CD8-positive, alpha-beta T cell (primary cell): ENCODE measurements at regions of chr5 and their contacts with region 1.

Region 1: GRCh38 chr5:611721-612486 is at the start of gene CEP72:
- DNase-seq: peak; percentile 84 to 96 (median 94)
- ATAC-seq: peak; percentile 97
- H3K4me3 ChIP-seq: peak within 1 kb of the TSS; percentile 71 to 88
- H3K4me3 Mint-ChIP-seq: peak within 1 kb of the TSS; percentile 88
- H3K27ac ChIP-seq: peak within 1 kb of the TSS; percentile 17 to 49
- H3K27ac Mint-ChIP-seq: peak within 1 kb of the TSS; percentile 82
- H3K4me1 ChIP-seq: peaks cover 19% of the 10 kb centered on the region
- H3K4me1 Mint-ChIP-seq: peaks cover 43% of the 10 kb centered on the region
- H3K27me3 ChIP-seq: no peaks in the 10 kb centered on the region
- H3K27me3 Mint-ChIP-seq: peaks cover 10% of the 10 kb centered on the region
- CTCF ChIP-seq: no peak
- total RNA-seq, gene CEP72: 7.4 to 8.9 TPM

Region 2: DNA sequence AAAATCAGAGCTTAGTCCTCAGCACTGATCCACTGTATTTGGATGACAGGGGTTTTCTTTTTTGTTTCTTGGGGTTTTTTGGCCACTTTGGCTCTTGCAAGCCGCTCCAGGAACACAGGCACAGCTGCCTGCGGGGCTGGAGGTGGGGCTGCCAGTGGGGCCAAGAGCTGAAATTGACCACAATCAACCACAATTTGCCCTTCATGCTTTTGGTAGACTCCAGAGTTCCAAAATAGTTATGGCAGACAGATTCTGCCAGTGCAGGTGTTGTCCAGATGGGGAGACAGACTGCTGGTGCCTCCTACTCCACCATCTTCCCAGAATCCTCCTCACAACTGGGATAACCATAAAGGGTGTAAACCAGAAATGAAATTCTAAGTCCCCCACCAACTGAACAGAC is 483.5 kb before region 1 on chr5:
- CTCF ChIA-PET with region 1: no interaction called
- POLR2A ChIA-PET with region 1: no interaction called
- intact Hi-C with region 1: no loop called
- DNase-seq: no peak
- ATAC-seq: no peak
- H3K4me3 ChIP-seq: no peak overlapping the region
- H3K4me3 Mint-ChIP-seq: no peak overlapping the region
- H3K27ac ChIP-seq: no peak overlapping the region
- H3K27ac Mint-ChIP-seq: no peak overlapping the region
- H3K4me1 ChIP-seq: no peaks in the 10 kb centered on the region
- H3K4me1 Mint-ChIP-seq: no peaks in the 10 kb centered on the region
- H3K27me3 ChIP-seq: peaks cover 0 to 2% of the 10 kb centered on the region in 2 experiments
- H3K27me3 Mint-ChIP-seq: peaks cover 33% of the 10 kb centered on the region
- CTCF ChIP-seq: no peak

Region 3: GRCh38 chr5:217860-218456 is 393.9 kb before region 1 on chr5 and contains the starts of genes CCDC127 and SDHA:
- CTCF ChIA-PET with region 1: no interaction called
- POLR2A ChIA-PET with region 1: no interaction called
- intact Hi-C with region 1: loop called in 1 of 2 experiments (anchors 2 kb)
- DNase-seq: peak; percentile 94 to 99 (median 99)
- ATAC-seq: peak; percentile 85
- H3K4me3 ChIP-seq: peak within 1 kb of the TSS; percentile 52 to 83
- H3K4me3 Mint-ChIP-seq: peak within 1 kb of the TSS; percentile 95
- H3K27ac ChIP-seq: peak within 1 kb of the TSS; percentile 70 to 87
- H3K27ac Mint-ChIP-seq: peak within 1 kb of the TSS; percentile 95
- H3K4me1 ChIP-seq: peaks cover 22% of the 10 kb centered on the region
- H3K4me1 Mint-ChIP-seq: peaks cover 52% of the 10 kb centered on the region
- H3K27me3 ChIP-seq: no peaks in the 10 kb centered on the region
- H3K27me3 Mint-ChIP-seq: no peaks in the 10 kb centered on the region
- CTCF ChIP-seq: peak; percentile 33
- total RNA-seq, gene CCDC127: 1.5 to 2.2 TPM
- total RNA-seq, gene SDHA: 203 to 216 TPM

Region 4: GRCh38 chr5:442335-443238 is 169.3 kb before region 1 on chr5 and contains the start of gene EXOC3:
- CTCF ChIA-PET with region 1: interaction called, 3 read pairs
- POLR2A ChIA-PET with region 1: no interaction called
- intact Hi-C with region 1: loop called (anchors 2 kb)
- DNase-seq: peak; percentile 48 to 88 (median 76)
- ATAC-seq: peak; percentile 79
- H3K4me3 ChIP-seq: peak within 1 kb of the TSS; percentile 94 to 97
- H3K4me3 Mint-ChIP-seq: peak within 1 kb of the TSS; percentile 95
- H3K27ac ChIP-seq: peak within 1 kb of the TSS; percentile 72 to 78
- H3K27ac Mint-ChIP-seq: peak within 1 kb of the TSS; percentile 93
- H3K4me1 ChIP-seq: peaks cover 26% of the 10 kb centered on the region
- H3K4me1 Mint-ChIP-seq: peaks cover 33% of the 10 kb centered on the region
- H3K27me3 ChIP-seq: no peaks in the 10 kb centered on the region
- H3K27me3 Mint-ChIP-seq: no peaks in the 10 kb centered on the region
- CTCF ChIP-seq: no peak
- total RNA-seq, gene EXOC3: 82.2 to 85.2 TPM

Region 5: DNA sequence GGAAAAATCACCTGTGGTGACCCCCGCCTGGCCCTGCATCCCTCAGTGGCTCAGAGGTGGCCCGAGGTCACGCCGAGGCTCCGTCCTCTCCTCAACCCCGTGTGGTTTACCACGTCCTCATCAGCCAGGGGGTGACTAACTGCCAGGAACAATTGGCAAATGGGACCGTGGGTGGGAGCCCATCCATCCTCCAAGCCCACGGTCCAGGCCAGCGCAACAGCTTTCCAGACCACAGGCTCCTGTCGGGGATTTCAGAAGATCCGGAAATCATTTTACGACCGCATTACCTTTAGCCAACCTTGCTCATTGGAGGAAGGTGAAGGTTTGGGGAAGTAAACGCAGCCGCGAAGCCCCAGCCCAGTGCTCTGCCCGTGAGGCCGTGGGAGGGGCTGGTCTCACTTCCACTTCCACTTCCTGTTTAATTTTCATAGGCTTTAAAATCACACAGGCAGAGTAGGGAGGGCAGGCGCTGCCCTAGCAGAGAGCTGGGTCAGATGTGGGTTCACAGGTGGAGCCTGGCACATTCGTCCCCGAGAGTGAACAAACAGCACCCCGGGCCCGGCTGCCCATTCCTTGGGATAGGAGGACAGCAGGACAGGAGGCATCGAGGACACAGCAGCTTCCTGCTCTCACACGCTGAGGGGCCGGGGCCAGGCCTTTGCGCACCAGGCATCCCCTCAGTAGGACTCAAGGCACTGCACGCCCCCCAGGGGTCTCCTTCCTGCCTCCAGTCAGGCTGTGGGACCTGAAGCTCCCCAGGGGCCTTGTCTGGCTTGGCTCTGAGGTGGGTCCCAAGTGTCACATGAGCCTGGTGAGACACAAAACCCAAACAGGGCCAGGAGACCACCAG is 67.9 kb before region 1 on chr5:
- CTCF ChIA-PET with region 1: no interaction called
- POLR2A ChIA-PET with region 1: no interaction called
- intact Hi-C with region 1: no loop called
- DNase-seq: peak in 8 of 9 experiments; percentile 18 to 71 (median 36)
- ATAC-seq: peak; percentile 81
- H3K4me3 ChIP-seq: peak overlapping the region; percentile 32 to 34
- H3K4me3 Mint-ChIP-seq: peak overlapping the region; percentile 68
- H3K27ac ChIP-seq: peak overlapping the region; percentile 11 to 51
- H3K27ac Mint-ChIP-seq: peak overlapping the region; percentile 81
- H3K4me1 ChIP-seq: peaks cover 17% of the 10 kb centered on the region
- H3K4me1 Mint-ChIP-seq: peaks cover 13% of the 10 kb centered on the region
- H3K27me3 ChIP-seq: no peaks in the 10 kb centered on the region
- H3K27me3 Mint-ChIP-seq: peaks cover 8% of the 10 kb centered on the region
- CTCF ChIP-seq: no peak

Region 6: DNA sequence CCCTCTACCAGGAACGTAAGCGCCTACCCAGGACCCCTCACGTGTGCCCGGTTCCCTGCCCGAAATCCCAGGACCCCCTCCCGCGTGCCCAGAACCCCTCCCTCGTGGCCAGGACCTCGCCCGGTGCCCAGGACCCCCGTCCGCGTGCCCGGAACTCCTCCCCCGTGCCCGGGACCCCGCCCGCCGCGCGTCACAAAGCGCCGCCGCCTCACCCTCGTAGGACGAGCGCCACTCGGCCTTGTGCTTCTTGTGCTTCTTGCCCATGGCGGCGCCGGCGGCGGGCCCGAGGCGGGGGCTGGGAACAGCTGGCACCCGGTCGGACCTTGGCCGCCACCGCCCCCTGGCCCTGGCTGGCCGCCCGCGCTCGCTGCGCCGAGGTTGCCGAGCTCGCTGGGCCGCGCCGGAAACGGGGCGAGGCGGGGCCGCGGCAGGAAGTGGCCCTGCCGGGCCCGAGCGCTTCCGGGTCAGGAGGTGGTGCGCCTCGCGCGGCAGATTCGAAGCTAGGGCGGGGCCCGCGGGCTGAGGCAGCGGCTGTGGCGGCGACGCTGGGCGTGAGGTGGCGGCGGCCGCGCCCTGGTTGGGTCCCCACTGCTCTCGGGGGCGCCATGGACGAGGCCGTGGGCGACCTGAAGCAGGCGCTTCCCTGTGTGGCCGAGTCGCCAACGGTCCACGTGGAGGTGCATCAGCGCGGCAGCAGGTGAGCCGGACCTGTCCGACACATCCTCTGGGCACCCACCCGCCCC is 280.7 kb after region 1 on chr5 and contains the starts of genes BRD9 and TRIP13:
- CTCF ChIA-PET with region 1: no interaction called
- POLR2A ChIA-PET with region 1: no interaction called
- intact Hi-C with region 1: loop called in 1 of 2 experiments (anchors 2 kb)
- DNase-seq: peak; percentile 68 to 92 (median 81)
- ATAC-seq: peak; percentile 94
- H3K4me3 ChIP-seq: peak within 1 kb of the TSS; percentile 85 to 90
- H3K4me3 Mint-ChIP-seq: peak within 1 kb of the TSS; percentile 85
- H3K27ac ChIP-seq: peak within 1 kb of the TSS; percentile 74 to 77
- H3K27ac Mint-ChIP-seq: peak within 1 kb of the TSS; percentile 91
- H3K4me1 ChIP-seq: peaks cover 17% of the 10 kb centered on the region
- H3K4me1 Mint-ChIP-seq: peaks cover 22% of the 10 kb centered on the region
- H3K27me3 ChIP-seq: no peaks in the 10 kb centered on the region
- H3K27me3 Mint-ChIP-seq: no peaks in the 10 kb centered on the region
- CTCF ChIP-seq: no peak
- total RNA-seq, gene BRD9: 99.8 to 108 TPM
- total RNA-seq, gene TRIP13: 0.33 to 0.76 TPM

Region 7: GRCh38 chr5:932628-933250 is 320.8 kb after region 1 on chr5:
- CTCF ChIA-PET with region 1: no interaction called
- POLR2A ChIA-PET with region 1: no interaction called
- intact Hi-C with region 1: no loop called
- DNase-seq: no peak
- ATAC-seq: no peak
- H3K4me3 ChIP-seq: no peak overlapping the region
- H3K4me3 Mint-ChIP-seq: no peak overlapping the region
- H3K27ac ChIP-seq: no peak overlapping the region
- H3K27ac Mint-ChIP-seq: no peak overlapping the region
- H3K4me1 ChIP-seq: no peaks in the 10 kb centered on the region
- H3K4me1 Mint-ChIP-seq: peaks cover 2% of the 10 kb centered on the region
- H3K27me3 ChIP-seq: peaks cover 0 to 2% of the 10 kb centered on the region in 2 experiments
- H3K27me3 Mint-ChIP-seq: peaks cover 10% of the 10 kb centered on the region
- CTCF ChIP-seq: no peak

Region 8: GRCh38 chr5:1227669-1228068 is 615.8 kb after region 1 on chr5:
- CTCF ChIA-PET with region 1: no interaction called
- POLR2A ChIA-PET with region 1: no interaction called
- intact Hi-C with region 1: no loop called
- DNase-seq: no peak
- ATAC-seq: no peak
- H3K4me3 ChIP-seq: no peak overlapping the region
- H3K4me3 Mint-ChIP-seq: no peak overlapping the region
- H3K27ac ChIP-seq: no peak overlapping the region
- H3K27ac Mint-ChIP-seq: no peak overlapping the region
- H3K4me1 ChIP-seq: no peaks in the 10 kb centered on the region
- H3K4me1 Mint-ChIP-seq: peaks cover 8% of the 10 kb centered on the region
- H3K27me3 ChIP-seq: no peaks in the 10 kb centered on the region
- H3K27me3 Mint-ChIP-seq: peaks cover 6% of the 10 kb centered on the region
- CTCF ChIP-seq: no peak

Region 9: GRCh38 chr5:1799602-1800471 is 1187.9 kb after region 1 on chr5 and contains the start of gene MRPL36:
- CTCF ChIA-PET with region 1: no interaction called
- POLR2A ChIA-PET with region 1: no interaction called
- intact Hi-C with region 1: loop called in 1 of 2 experiments (anchors 10 kb)
- DNase-seq: peak; percentile 84 to 96 (median 94)
- ATAC-seq: peak; percentile 70
- H3K4me3 ChIP-seq: peak within 1 kb of the TSS; percentile 82 to 94
- H3K4me3 Mint-ChIP-seq: peak within 1 kb of the TSS; percentile 99
- H3K27ac ChIP-seq: peak within 1 kb of the TSS; percentile 70 to 80
- H3K27ac Mint-ChIP-seq: peak within 1 kb of the TSS; percentile 99
- H3K4me1 ChIP-seq: peaks cover 24% of the 10 kb centered on the region
- H3K4me1 Mint-ChIP-seq: peaks cover 68% of the 10 kb centered on the region
- H3K27me3 ChIP-seq: no peaks in the 10 kb centered on the region
- H3K27me3 Mint-ChIP-seq: no peaks in the 10 kb centered on the region
- CTCF ChIP-seq: no peak
- total RNA-seq, gene MRPL36: 11.6 to 12.7 TPM